PC-3 (cell line): ENCODE measurements at regions of chr3 and their contacts with region 1.

Region 1: DNA sequence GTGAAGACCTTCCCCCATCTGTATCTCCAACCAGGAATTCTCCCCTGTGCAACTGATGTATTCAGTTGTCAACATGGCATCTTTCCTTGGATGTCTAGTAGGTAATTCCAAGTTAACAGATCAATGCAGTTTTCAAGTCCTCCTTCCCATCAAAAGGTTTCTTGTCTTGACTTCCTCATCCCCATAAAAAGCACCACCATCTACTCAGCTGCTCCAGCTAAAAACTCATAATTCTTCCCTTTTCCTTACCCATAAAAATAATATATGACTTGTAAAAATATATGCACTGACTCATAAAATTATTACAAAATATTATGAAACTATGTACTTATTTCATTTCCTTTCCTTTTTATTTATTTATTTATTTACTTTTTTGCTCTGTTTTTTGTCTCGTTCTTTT is 5.0 kb upstream of the CAND2 start:
- DNase-seq: peak; percentile 28
- ATAC-seq: peak; percentile 82
- H3K4me3 ChIP-seq: no peak overlapping the region
- H3K27ac ChIP-seq: no peak overlapping the region
- H3K4me1 ChIP-seq: 0 out of 2 replicates have a peak, but pooled peaks cover 6% of the 10 kb centered on the region
- H3K27me3 ChIP-seq: no peaks in the 10 kb centered on the region
- CTCF ChIP-seq: no peak

Region 2: DNA sequence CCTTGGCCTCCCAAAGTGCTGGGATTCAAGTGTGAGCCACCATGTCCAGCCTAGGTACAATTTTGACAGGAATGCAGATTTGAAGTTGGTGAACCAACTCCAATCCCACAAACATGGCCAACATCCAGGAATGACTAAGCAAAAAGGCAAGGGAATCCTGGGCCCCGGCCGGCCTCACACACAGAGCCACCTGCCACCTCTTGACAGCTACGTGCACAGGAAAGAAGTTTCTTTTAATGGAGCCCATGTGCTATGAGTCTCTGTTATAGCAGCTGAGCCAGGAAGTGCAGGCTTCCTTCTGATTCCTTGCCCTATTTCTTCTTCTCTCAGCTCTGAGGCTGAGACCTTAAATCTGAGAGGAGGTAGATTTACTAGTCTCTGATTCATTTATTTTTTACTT is 41.2 kb before region 1 on chr3:
- CTCF ChIA-PET with region 1: no interaction called
- POLR2A ChIA-PET with region 1: no interaction called
- intact Hi-C with region 1: no loop called
- DNase-seq: peak; percentile 94
- ATAC-seq: peak; percentile 71
- H3K4me3 ChIP-seq: no peak overlapping the region
- H3K27ac ChIP-seq: peak overlapping the region; percentile 87
- H3K4me1 ChIP-seq: peaks cover 53% of the 10 kb centered on the region
- H3K27me3 ChIP-seq: no peaks in the 10 kb centered on the region
- CTCF ChIP-seq: no peak

Region 3: DNA sequence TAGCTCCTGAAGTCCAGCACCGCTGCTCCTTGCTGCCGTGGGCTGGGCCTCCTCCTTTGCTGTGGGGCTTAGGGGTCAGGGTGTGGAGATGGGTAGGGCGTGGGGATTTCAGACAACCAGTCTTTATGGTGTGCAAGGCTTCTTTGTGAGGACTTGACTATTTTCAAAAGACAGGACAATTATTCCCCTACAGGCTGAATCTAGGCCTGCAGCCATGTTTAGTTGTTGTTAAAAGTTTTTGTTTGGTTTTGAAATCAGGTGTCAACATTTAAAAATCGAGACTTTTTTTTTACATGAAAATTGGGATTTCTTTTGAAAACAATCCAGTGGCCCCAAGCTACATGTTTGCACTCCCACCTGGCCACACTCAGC is 39.3 kb after region 1 on chr3:
- CTCF ChIA-PET with region 1: no interaction called
- POLR2A ChIA-PET with region 1: no interaction called
- intact Hi-C with region 1: loop called (anchors 1 kb)
- DNase-seq: peak; percentile 34
- ATAC-seq: peak; percentile 0; the same call in 1 of the 2 replicates
- H3K4me3 ChIP-seq: peak overlapping the region; percentile 25; the same call in 1 of the 2 replicates
- H3K27ac ChIP-seq: peak overlapping the region; percentile 94
- H3K4me1 ChIP-seq: peaks cover 42% of the 10 kb centered on the region
- H3K27me3 ChIP-seq: no peaks in the 10 kb centered on the region
- CTCF ChIP-seq: 0 out of 2 replicates have a peak, but pooled peaks have one; percentile 18